CD8-positive, alpha-beta memory T cell (primary cell): ENCODE measurements at regions of chr12 and their contacts with region 1.

Region 1: GRCh38 chr12:6944381-6945186 is 762 bp downstream of the C12orf57 start:
- DNase-seq: peak; percentile 73 to 93 (median 84)
- H3K4me3 ChIP-seq: peak overlapping the region; percentile 72
- H3K4me3 Mint-ChIP-seq: peak overlapping the region; percentile 87 to 98 (median 94)
- H3K27ac ChIP-seq: peak overlapping the region; percentile 96
- H3K27ac Mint-ChIP-seq: peak overlapping the region; percentile 94 to 100 (median 99)
- H3K4me1 ChIP-seq: peaks cover 58% of the 10 kb centered on the region
- H3K4me1 Mint-ChIP-seq: peaks cover 60 to 67% (median 67%) of the 10 kb centered on the region in 3 donors
- H3K27me3 ChIP-seq: no peaks in the 10 kb centered on the region
- H3K27me3 Mint-ChIP-seq: peaks cover 0 to 5% of the 10 kb centered on the region in 2 donors

Region 2: DNA sequence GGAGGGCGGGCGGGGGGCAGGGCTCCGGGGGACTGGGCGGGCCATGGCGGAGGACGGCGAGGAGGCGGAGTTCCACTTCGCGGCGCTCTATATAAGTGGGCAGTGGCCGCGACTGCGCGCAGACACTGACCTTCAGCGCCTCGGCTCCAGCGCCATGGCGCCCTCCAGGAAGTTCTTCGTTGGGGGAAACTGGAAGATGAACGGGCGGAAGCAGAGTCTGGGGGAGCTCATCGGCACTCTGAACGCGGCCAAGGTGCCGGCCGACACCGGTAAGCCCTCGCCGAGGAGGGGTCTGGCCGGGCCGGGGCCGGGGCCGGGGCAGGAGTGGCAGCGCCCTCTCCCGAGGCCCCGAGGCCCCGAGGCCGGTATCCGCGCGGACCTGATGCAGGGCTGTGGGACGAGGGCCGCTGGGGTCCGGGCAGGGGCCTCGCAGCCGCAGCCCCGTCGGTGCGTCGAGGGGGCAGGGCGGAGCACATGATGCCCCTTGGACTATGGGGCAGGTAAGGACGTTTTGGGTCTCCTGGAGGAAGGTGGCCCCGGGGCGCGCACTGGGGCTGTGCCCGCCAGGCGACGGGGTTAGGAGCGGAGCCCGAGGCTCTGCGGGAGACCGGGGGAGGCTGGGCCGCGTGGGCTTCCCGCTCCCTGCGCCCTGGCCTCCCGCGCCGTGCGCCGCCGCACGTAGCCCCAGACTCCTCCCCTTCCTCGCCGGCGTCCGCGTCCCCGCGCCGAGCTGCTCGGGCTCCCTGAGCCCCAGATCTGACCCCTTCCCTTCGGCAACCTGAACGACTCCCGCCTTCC is 77.0 kb before region 1 on chr12 and contains the start of gene TPI1:
- CTCF ChIA-PET with region 1: interaction called, 34 read pairs
- POLR2A ChIA-PET with region 1: interaction called, 26 read pairs
- DNase-seq: peak; percentile 62 to 85 (median 73)
- H3K4me3 ChIP-seq: peak within 1 kb of the TSS; percentile 58
- H3K4me3 Mint-ChIP-seq: peak within 1 kb of the TSS; percentile 87 to 98 (median 92)
- H3K27ac ChIP-seq: peak within 1 kb of the TSS; percentile 76
- H3K27ac Mint-ChIP-seq: peak within 1 kb of the TSS; percentile 85 to 96 (median 92)
- H3K4me1 ChIP-seq: peaks cover 38% of the 10 kb centered on the region
- H3K4me1 Mint-ChIP-seq: peaks cover 43 to 55% (median 47%) of the 10 kb centered on the region in 3 donors
- H3K27me3 ChIP-seq: no peaks in the 10 kb centered on the region
- H3K27me3 Mint-ChIP-seq: no peaks in the 10 kb centered on the region
- total RNA-seq, gene TPI1: 1,331 to 1,374 TPM

Region 3: DNA sequence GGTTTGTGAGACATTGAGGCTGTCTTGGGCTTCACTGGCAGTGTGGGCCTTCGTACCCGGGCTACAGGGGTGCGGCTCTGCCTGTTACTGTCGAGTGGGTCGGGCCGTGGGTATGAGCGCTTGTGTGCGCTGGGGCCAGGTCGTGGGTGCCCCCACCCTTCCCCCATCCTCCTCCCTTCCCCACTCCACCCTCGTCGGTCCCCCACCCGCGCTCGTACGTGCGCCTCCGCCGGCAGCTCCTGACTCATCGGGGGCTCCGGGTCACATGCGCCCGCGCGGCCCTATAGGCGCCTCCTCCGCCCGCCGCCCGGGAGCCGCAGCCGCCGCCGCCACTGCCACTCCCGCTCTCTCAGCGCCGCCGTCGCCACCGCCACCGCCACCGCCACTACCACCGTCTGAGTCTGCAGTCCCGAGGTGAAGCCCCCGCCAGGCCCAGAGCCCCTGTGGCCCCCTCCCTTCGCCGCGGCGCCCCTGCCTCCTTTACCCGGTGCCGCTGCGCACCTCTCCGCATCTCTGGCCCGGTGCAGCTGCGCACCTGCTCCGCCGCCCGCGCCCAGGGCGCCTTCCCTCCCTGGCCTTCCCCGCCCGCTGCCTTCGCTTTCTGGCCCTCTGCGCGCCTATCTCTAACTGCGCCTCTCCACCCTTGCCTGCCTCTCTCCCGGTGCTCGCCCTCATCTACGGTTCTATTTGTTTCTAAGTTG is 30.2 kb before region 1 on chr12 and contains the start of gene ENO2:
- CTCF ChIA-PET with region 1: interaction called, 25 read pairs
- POLR2A ChIA-PET with region 1: interaction called, 12 read pairs
- DNase-seq: peak; percentile 79 to 94 (median 87)
- H3K4me3 ChIP-seq: peak within 1 kb of the TSS; percentile 69
- H3K4me3 Mint-ChIP-seq: peak within 1 kb of the TSS; percentile 89 to 99 (median 94)
- H3K27ac ChIP-seq: peak within 1 kb of the TSS; percentile 66
- H3K27ac Mint-ChIP-seq: peak within 1 kb of the TSS; percentile 94 to 99 (median 96)
- H3K4me1 ChIP-seq: peaks cover 21% of the 10 kb centered on the region
- H3K4me1 Mint-ChIP-seq: peaks cover 21 to 44% (median 30%) of the 10 kb centered on the region in 3 donors
- H3K27me3 ChIP-seq: no peaks in the 10 kb centered on the region
- H3K27me3 Mint-ChIP-seq: no peaks in the 10 kb centered on the region
- total RNA-seq, gene ENO2: 125 to 131 TPM

Region 4: GRCh38 chr12:6965026-6965661 is 20.6 kb after region 1 on chr12:
- CTCF ChIA-PET with region 1: interaction called, 815 read pairs
- POLR2A ChIA-PET with region 1: interaction called, 481 read pairs
- DNase-seq: peak; percentile 79 to 90 (median 84)
- H3K4me3 ChIP-seq: no peak overlapping the region
- H3K4me3 Mint-ChIP-seq: peak overlapping the region in 2 of 7 donors; percentile 38 to 84
- H3K27ac ChIP-seq: no peak overlapping the region
- H3K27ac Mint-ChIP-seq: peak overlapping the region; percentile 85 to 98 (median 90)
- H3K4me1 ChIP-seq: peaks cover 59% of the 10 kb centered on the region
- H3K4me1 Mint-ChIP-seq: peaks cover 43 to 60% (median 59%) of the 10 kb centered on the region in 3 donors
- H3K27me3 ChIP-seq: no peaks in the 10 kb centered on the region
- H3K27me3 Mint-ChIP-seq: no peaks in the 10 kb centered on the region

Region 5: GRCh38 chr12:7108796-7109571 is 164.4 kb after region 1 on chr12 and contains the start of gene C1RL:
- CTCF ChIA-PET with region 1: interaction called, 29 read pairs
- POLR2A ChIA-PET with region 1: interaction called, 10 read pairs
- DNase-seq: peak; percentile 62 to 83 (median 76)
- H3K4me3 ChIP-seq: peak within 1 kb of the TSS; percentile 96
- H3K4me3 Mint-ChIP-seq: peak within 1 kb of the TSS; percentile 93 to 99 (median 95)
- H3K27ac ChIP-seq: peak within 1 kb of the TSS; percentile 75
- H3K27ac Mint-ChIP-seq: peak within 1 kb of the TSS; percentile 86 to 97 (median 94)
- H3K4me1 ChIP-seq: peaks cover 25% of the 10 kb centered on the region
- H3K4me1 Mint-ChIP-seq: peaks cover 46 to 57% (median 52%) of the 10 kb centered on the region in 3 donors
- H3K27me3 ChIP-seq: no peaks in the 10 kb centered on the region
- H3K27me3 Mint-ChIP-seq: peaks cover 0 to 2% of the 10 kb centered on the region in 2 donors
- total RNA-seq, gene C1RL: 12.7 to 14.2 TPM